ENCODE measurements at regions of chr2 and their contacts with region 1.

Region 1: DNA sequence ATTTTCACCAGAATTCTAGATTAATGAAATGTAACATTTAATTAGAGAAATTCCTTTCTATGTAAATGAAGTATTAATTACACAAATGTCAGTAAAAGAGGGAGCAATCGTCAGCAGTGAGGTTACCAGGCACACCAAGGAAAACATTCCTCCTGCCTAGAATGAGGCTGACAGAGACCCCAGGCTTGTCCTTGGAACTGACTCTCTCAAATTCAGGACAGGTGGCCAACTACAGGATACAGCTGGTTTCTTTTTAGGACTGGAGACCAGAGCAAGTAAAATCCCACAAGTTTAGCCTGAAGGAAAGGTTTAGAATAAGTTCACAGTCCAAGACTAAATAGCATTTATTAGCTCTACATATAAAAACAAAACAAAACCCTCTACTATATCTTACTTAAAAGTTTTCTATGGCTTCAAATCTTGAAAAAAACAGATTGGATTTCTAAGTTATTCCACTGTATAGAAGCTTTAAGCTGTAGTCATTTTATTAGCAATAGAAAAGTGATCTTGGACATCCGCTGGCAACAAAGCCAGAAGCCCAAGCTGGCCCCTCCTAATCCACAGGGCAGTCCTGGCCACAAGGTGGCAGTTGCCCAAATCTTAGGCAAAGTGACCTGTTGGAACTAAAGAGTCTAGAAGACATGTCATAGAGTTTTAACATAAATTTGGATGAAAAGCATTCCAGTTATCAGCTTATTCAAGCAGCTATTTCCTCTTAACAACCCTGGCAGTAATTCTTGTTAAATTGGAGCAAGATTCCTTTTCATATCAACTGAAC is 81.0 kb downstream of the SP3 start:
- DNase-seq: peak; percentile 43 to 69 (median 62)
- ATAC-seq: peak in 3 of 4 donors; percentile 52 to 71 (median 69)
- H3K4me3 ChIP-seq: no peak overlapping the region
- H3K27ac ChIP-seq: no peak overlapping the region
- H3K4me1 ChIP-seq: peaks cover 0 to 11% (median 0%) of the 10 kb centered on the region in 12 donors
- H3K27me3 ChIP-seq: no peaks in the 10 kb centered on the region
- CTCF ChIP-seq: peak; percentile 53 to 79 (median 67)
- POLR2A ChIP-seq: no peak

Region 2: DNA sequence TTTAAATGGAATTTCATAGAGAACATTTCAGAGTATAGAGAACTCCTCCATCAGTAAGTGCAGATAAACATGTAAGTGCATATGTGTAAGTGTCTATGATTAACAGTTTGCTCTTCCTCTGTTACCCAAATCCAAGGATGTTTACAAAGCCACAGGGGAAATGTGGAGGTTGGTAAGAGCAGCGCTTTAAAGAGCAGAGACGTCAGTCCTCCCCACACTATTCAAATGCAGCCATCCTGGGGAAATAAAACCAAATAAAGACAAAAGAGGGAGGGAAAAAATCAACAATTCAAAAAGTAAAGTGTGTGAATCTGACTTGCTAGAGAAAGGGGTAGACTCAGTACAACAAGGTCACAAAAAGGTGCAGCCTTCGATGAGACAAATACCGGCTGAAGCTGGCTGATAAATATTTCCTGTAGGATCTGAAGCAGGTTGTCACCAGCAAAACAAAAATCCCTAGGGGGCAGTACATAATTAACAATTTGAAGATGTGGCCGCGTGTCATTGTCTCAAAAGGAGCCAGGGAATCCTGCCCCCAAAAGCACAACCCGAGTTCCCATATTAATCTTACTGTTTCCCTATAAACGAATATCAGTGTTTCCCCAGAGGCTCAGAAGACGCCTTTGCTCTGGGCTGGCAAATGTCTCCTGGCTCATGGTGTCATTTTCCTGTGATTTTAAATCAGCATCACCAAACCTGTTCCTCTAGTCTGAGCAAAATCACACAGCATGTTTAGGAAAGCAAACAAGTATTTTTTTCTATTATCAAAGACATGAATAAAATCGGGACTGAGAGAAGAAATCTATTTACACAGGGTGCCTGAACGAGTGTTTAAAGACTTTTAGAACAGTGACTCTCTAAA is 313.0 kb before region 1 on chr2:
- intact Hi-C with region 1: loop called in 2 of 10 experiments (anchors 10 kb)
- DNase-seq: no peak
- ATAC-seq: peak in 3 of 4 donors; percentile 31 to 48 (median 42)
- H3K4me3 ChIP-seq: peak overlapping the region in 1 of 12 donors; percentile 5
- H3K27ac ChIP-seq: no peak overlapping the region
- H3K4me1 ChIP-seq: peaks cover 0 to 10% (median 0%) of the 10 kb centered on the region in 12 donors
- H3K27me3 ChIP-seq: peaks cover 0 to 6% (median 0%) of the 10 kb centered on the region in 9 donors
- CTCF ChIP-seq: peak in 10 of 12 donors; percentile 13 to 51 (median 37)
- POLR2A ChIP-seq: no peak

Region 3: GRCh38 chr2:173990970-173991819 is 107.0 kb after region 1 on chr2:
- intact Hi-C with region 1: loop called in 1 of 10 experiments (anchors 10 kb)
- DNase-seq: peak; percentile 79 to 90 (median 82)
- ATAC-seq: peak; percentile 64 to 85 (median 78)
- H3K4me3 ChIP-seq: peak overlapping the region in 5 of 12 donors; percentile 2 to 8 (median 4)
- H3K27ac ChIP-seq: peak overlapping the region; percentile 25 to 85 (median 68)
- H3K4me1 ChIP-seq: peaks cover 0 to 74% (median 43%) of the 10 kb centered on the region in 12 donors
- H3K27me3 ChIP-seq: no peaks in the 10 kb centered on the region
- CTCF ChIP-seq: no peak
- POLR2A ChIP-seq: no peak

Region 4: DNA sequence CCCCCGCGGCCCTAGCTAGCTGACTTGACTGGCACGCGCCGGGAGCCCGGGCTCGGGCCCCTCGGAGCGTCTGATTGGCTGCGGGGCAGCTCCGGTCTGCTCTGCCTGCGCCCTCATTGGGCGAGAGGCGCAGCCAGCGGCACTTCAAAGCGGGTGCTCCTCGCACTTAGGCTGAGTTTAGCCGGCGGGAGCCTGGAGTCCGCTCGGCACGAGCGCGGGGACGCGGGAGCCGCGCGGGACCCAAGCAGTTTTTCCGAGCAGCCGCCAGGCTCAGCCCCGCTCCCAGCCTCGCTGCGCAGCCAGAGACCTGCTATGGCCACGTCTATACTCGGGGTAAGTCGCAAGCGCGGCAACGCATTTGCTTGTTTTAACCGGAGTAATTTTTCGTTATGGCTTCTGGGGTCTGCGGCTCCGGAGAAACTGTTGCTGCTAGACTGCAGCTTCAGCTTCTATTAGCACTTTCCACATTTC is 450.6 kb after region 1 on chr2 and contains the start of gene SP9:
- intact Hi-C with region 1: loop called in 3 of 10 experiments (anchors 5 kb)
- DNase-seq: peak in 1 of 5 donors; percentile 63
- ATAC-seq: peak in 2 of 4 donors; percentile 24 to 42
- H3K4me3 ChIP-seq: peak within 1 kb of the TSS in 9 of 12 donors; percentile 13 to 53 (median 27)
- H3K27ac ChIP-seq: no peak within 1 kb of the TSS
- H3K4me1 ChIP-seq: peaks cover 7 to 63% (median 26%) of the 10 kb centered on the region in 12 donors
- H3K27me3 ChIP-seq: peaks cover 86 to 100% (median 98%) of the 10 kb centered on the region in 9 donors
- CTCF ChIP-seq: no peak
- POLR2A ChIP-seq: no peak
- total RNA-seq, gene SP9: 0.08 TPM in 1 of 9 donors, not detected in the others